HepG2 (cell line): ENCODE measurements at regions of chr6 and their contacts with region 1.

Region 1: DNA sequence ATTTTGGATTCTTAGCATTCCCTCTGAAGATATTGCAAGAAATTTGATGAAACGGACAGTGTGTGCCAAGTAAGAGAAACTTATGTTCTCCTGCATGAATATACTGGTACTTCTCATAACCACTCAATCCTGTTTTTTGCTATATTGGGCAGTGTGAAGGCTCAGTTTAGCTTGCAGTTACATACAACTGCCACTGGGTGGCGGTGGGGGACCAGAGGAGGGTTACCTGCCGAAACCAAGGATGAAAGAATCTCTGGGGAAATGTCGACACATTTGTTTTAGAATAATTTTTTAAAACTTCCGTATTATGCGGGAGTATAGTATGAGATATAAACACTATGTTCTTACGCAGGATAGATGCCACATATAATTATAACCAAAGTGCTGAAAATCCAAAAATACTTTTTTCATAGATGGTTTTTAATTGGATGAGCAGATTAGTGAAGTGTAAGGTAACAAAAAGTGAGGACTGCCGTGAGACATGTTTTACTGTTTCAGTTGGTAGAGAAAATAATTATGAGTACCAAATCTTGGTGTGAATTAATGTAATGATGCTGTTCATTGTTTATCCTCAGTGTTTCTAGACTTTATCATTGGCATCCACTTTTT is 9.7 kb downstream of the TRMT11 start:
- DNase-seq: peak; percentile 72
- ATAC-seq: peak; percentile 97
- H3K4me3 ChIP-seq: no peak overlapping the region
- H3K27ac ChIP-seq: no peak overlapping the region
- H3K4me1 ChIP-seq: peaks cover 44% of the 10 kb centered on the region
- H3K27me3 ChIP-seq: no peaks in the 10 kb centered on the region
- CTCF ChIP-seq: peak; percentile 91
- EP300 ChIP-seq: no peak
- POLR2A ChIP-seq: no peak
- RAD21 ChIP-seq: peak; percentile 63

Region 2: GRCh38 chr6:126015863-126016262 is 19.8 kb after region 1 on chr6:
- CTCF ChIA-PET with region 1: no interaction called
- POLR2A ChIA-PET with region 1: no interaction called
- in situ Hi-C with region 1: no loop called
- intact Hi-C with region 1: loop called (anchors 2 kb)
- DNase-seq: no peak
- ATAC-seq: no peak
- H3K4me3 ChIP-seq: no peak overlapping the region
- H3K27ac ChIP-seq: no peak overlapping the region
- H3K4me1 ChIP-seq: no peaks in the 10 kb centered on the region
- H3K27me3 ChIP-seq: no peaks in the 10 kb centered on the region
- CTCF ChIP-seq: no peak
- EP300 ChIP-seq: no peak
- POLR2A ChIP-seq: no peak
- RAD21 ChIP-seq: no peak

Region 3: GRCh38 chr6:126091507-126091906 is 95.4 kb after region 1 on chr6:
- CTCF ChIA-PET with region 1: no interaction called
- POLR2A ChIA-PET with region 1: no interaction called
- in situ Hi-C with region 1: no loop called
- intact Hi-C with region 1: no loop called
- DNase-seq: no peak
- ATAC-seq: no peak
- H3K4me3 ChIP-seq: no peak overlapping the region
- H3K27ac ChIP-seq: no peak overlapping the region
- H3K4me1 ChIP-seq: no peaks in the 10 kb centered on the region
- H3K27me3 ChIP-seq: no peaks in the 10 kb centered on the region
- CTCF ChIP-seq: no peak
- EP300 ChIP-seq: no peak
- POLR2A ChIP-seq: no peak
- RAD21 ChIP-seq: no peak

Region 4: DNA sequence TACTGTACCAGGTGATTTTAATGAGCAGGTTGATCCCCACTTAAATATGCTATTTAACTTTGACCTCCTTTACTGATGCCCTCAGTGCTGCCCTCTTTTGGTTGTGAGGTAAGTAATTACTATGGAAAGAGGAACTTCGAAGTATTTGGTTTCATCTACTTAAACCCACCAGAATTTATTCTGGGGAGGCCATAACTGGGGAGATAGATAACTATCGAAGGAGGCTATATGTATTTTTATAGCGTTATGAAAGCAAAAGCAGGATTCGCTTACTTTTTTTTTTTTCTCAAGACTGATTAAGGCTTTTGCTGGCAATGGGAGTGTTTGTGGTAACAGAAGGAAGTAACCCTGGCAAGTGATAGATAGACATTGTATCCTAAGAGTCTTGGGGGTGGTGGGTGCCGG is 174.9 kb after region 1 on chr6:
- CTCF ChIA-PET with region 1: interaction called, 3 read pairs
- POLR2A ChIA-PET with region 1: no interaction called
- in situ Hi-C with region 1: no loop called
- intact Hi-C with region 1: loop called (anchors 2 kb)
- DNase-seq: peak; percentile 52
- ATAC-seq: peak; percentile 82
- H3K4me3 ChIP-seq: no peak overlapping the region
- H3K27ac ChIP-seq: no peak overlapping the region
- H3K4me1 ChIP-seq: no peaks in the 10 kb centered on the region
- H3K27me3 ChIP-seq: no peaks in the 10 kb centered on the region
- CTCF ChIP-seq: peak; percentile 57
- EP300 ChIP-seq: no peak
- POLR2A ChIP-seq: no peak
- RAD21 ChIP-seq: peak; percentile 13; the same call in 1 of the 2 replicates

Region 5: DNA sequence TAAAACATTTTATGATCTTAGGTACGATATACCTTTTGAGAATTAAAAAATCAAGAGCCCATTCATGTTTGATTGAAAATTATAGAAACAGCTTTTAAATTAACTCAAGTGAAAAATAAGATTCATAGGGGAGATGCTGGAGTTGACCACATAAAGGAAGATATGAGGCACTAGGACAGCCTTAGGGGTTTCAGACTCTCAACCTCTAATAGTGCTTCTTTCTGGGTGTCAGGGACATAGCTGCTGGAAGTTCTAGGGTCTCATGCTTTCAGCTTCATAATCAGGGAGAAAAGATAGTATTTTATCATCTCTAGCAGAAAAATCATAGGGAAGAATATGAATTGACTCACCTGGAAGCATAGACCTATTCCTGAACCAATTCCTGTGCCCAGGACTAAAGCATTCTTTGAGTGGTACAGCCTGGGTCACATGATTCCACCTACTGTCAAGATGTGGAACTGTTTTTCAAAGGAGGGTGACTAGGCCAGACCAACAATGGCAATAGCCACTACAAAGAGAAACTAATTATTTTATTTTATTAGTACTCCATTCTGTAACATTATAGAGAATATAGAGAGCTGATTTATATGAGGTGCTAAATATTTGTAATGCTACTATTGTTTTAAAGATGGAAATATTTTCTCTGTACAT is 316.1 kb after region 1 on chr6:
- CTCF ChIA-PET with region 1: interaction called, 5 read pairs
- POLR2A ChIA-PET with region 1: no interaction called
- in situ Hi-C with region 1: no loop called
- intact Hi-C with region 1: loop called (anchors 10 kb)
- DNase-seq: peak; percentile 44
- ATAC-seq: peak; percentile 100
- H3K4me3 ChIP-seq: no peak overlapping the region
- H3K27ac ChIP-seq: no peak overlapping the region
- H3K4me1 ChIP-seq: no peaks in the 10 kb centered on the region
- H3K27me3 ChIP-seq: no peaks in the 10 kb centered on the region
- CTCF ChIP-seq: peak; percentile 54
- EP300 ChIP-seq: no peak
- POLR2A ChIP-seq: no peak
- RAD21 ChIP-seq: 0 out of 2 replicates have a peak, but pooled peaks have one; percentile 12

Region 6: GRCh38 chr6:126657561-126658175 is 661.6 kb after region 1 on chr6:
- CTCF ChIA-PET with region 1: no interaction called
- POLR2A ChIA-PET with region 1: no interaction called
- in situ Hi-C with region 1: no loop called
- intact Hi-C with region 1: loop called (anchors 10 kb)
- DNase-seq: peak; percentile 20
- ATAC-seq: peak; percentile 73
- H3K4me3 ChIP-seq: no peak overlapping the region
- H3K27ac ChIP-seq: no peak overlapping the region
- H3K4me1 ChIP-seq: no peaks in the 10 kb centered on the region
- H3K27me3 ChIP-seq: no peaks in the 10 kb centered on the region
- CTCF ChIP-seq: peak; percentile 65
- EP300 ChIP-seq: no peak
- POLR2A ChIP-seq: no peak
- RAD21 ChIP-seq: peak; percentile 41